ENCODE measurements at regions of chr12 and their contacts with region 1.

Region 1: GRCh38 chr12:57111031-57111734 is at the start of gene STAT6:
- DNase-seq: peak; percentile 83
- H3K4me3 Mint-ChIP-seq: peak within 1 kb of the TSS; percentile 94
- H3K27ac Mint-ChIP-seq: peak within 1 kb of the TSS; percentile 95
- H3K4me1 Mint-ChIP-seq: peaks cover 37% of the 10 kb centered on the region
- H3K27me3 Mint-ChIP-seq: peaks cover under 1% of the 10 kb centered on the region
- total RNA-seq, gene STAT6: 333 and 341 TPM in 2 replicates

Region 2: GRCh38 chr12:56158029-56158925 is 952.9 kb before region 1 on chr12 and contains the start of gene MYL6:
- intact Hi-C with region 1: loop called (anchors 5 kb)
- DNase-seq: peak; percentile 92
- H3K4me3 Mint-ChIP-seq: peak within 1 kb of the TSS; percentile 97
- H3K27ac Mint-ChIP-seq: peak within 1 kb of the TSS; percentile 91
- H3K4me1 Mint-ChIP-seq: peaks cover 54% of the 10 kb centered on the region
- H3K27me3 Mint-ChIP-seq: no peaks in the 10 kb centered on the region
- total RNA-seq, gene MYL6: 1,051 and 1,067 TPM in 2 replicates

Region 3: DNA sequence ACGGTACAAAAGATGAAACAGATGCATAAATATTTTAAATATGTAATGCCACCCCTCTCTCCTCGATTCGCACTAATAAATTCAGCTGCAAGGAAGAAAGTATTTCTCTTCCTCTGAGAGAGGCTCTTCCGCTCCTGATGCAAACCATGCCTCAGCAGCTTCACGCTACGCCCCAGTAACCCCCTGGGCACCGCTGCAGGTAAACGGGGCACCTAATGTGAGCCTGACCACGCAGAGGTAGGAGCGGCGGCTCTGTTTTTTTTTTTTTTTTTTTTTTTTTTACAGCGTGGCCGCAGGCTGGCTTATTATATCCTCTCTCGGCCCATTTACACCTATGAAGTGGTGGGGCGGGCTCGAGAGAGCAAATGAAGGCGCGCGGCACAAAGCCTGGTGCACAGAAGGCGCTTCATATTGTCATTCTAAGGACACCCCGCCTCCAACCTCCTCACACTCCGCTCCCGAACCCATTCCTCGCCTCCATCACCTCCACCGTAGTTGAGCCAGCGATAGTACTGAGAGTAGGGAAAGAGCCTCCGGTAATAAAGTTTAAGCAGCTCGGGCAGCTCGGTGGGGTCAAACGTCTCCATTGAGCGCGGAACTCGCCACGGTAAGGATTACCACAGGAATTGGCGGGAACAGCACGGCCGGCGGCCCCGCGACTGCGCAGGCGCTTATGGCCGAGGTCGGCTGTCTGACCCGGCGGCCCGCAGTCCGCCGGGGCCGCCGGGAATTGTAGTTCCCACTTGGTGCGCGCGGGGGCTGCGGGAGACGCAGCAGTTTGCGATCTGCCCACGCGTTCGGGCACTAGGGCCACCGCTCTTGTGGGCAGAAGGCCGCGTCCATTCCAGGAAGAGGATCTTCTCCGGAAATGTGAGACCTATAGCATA is 359.2 kb before region 1 on chr12 and contains the start of gene PRIM1:
- intact Hi-C with region 1: loop called (anchors 5 kb)
- DNase-seq: peak; percentile 88
- H3K4me3 Mint-ChIP-seq: peak within 1 kb of the TSS; percentile 98
- H3K27ac Mint-ChIP-seq: peak within 1 kb of the TSS; percentile 99
- H3K4me1 Mint-ChIP-seq: peaks cover 39% of the 10 kb centered on the region
- H3K27me3 Mint-ChIP-seq: no peaks in the 10 kb centered on the region
- total RNA-seq, gene PRIM1: 59.4 and 63.9 TPM in 2 replicates

Region 4: DNA sequence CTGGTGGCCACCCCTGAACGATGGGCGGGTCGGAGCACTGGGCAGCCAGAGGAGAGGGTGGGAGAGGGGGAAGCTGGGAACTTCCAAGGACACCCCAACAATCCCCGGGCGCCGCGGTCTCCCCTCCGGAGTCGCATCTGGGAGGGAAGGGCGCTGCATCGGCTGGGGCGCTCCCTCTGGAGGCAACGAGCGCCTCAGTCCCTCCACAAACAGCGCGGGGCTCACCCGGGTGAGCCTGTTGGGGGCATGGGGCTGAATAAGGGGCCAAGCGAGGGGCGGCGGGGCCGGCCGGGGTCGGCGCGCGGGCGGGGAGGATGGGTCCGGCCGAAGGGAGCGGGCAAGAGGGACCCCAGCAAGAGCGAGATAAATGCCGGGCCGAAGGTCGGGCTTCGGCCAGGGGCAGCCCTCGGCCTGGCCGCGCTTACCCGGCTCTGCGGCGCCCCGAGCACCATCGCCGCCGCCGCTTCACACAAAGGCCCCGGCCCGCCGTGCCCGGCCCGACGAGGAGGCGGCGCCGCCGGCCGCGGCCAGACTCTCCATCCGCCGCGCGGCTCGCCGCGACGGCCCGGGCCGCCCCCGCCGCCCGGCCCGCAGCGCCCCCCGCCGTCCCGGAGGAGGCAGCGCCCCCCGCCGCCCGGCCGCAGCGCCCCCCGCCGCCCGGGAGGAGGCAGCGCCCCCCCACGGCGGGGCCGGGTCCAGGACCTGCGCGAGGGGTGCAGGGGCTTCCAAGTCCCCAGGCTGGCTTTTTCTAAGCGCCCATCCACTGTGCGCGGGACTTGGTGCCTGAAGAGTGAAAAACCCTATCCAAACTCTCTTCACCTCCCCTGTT is 105.0 kb before region 1 on chr12 and contains the start of gene ZBTB39:
- intact Hi-C with region 1: loop called (anchors 1 kb)
- DNase-seq: peak; percentile 60
- H3K4me3 Mint-ChIP-seq: peak within 1 kb of the TSS; percentile 95
- H3K27ac Mint-ChIP-seq: peak within 1 kb of the TSS; percentile 89
- H3K4me1 Mint-ChIP-seq: peaks cover 39% of the 10 kb centered on the region
- H3K27me3 Mint-ChIP-seq: no peaks in the 10 kb centered on the region
- total RNA-seq, gene ZBTB39: 10.5 and 10.6 TPM in 2 replicates

Region 5: DNA sequence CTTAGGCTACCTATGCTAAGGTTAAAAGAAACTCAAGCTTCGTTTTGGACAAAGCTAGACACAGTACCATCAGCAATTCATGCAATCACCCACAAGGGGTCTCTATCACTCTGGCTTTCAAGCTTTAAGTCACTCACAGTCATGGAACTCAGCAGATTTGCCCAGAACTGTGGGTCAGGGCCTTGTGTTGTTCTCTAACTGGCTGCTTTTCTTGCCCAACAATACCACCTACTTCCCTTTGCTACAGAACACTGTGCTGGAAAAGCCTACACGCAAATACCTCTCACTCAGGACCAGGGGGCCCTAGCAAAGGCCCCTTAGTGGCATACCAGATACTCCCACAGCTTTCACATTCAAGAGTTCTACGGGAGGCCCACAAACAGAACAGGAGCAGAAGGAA is 41.7 kb before region 1 on chr12:
- intact Hi-C with region 1: loop called (anchors 1 kb)
- DNase-seq: peak; percentile 46
- H3K4me3 Mint-ChIP-seq: peak overlapping the region; percentile 30
- H3K27ac Mint-ChIP-seq: peak overlapping the region; percentile 88
- H3K4me1 Mint-ChIP-seq: peaks cover 56% of the 10 kb centered on the region
- H3K27me3 Mint-ChIP-seq: no peaks in the 10 kb centered on the region

Region 6: GRCh38 chr12:57088459-57089248 is 22.5 kb before region 1 on chr12 and contains the start of gene NAB2:
- intact Hi-C with region 1: loop called (anchors 1 kb)
- DNase-seq: peak; percentile 91
- H3K4me3 Mint-ChIP-seq: peak within 1 kb of the TSS; percentile 99
- H3K27ac Mint-ChIP-seq: peak within 1 kb of the TSS; percentile 98
- H3K4me1 Mint-ChIP-seq: peaks cover 62% of the 10 kb centered on the region
- H3K27me3 Mint-ChIP-seq: no peaks in the 10 kb centered on the region
- total RNA-seq, gene NAB2: 72.8 and 74.7 TPM in 2 replicates

Measured in activated T-helper 2 cell treated with anti-CD3 and anti-CD28 coated beads, Interferon-gamma antibody, Interleukin-2, Interleukin-4, amounts not matched to agents 10 μg/mL and 5 μg/mL and 100 μg/mL, durations not matched to agents 14 hours and 24 hours and 36 hours (primary cell).